A673 (cell line): ENCODE measurements at regions of chr12 and their contacts with region 1.

Region 1: DNA sequence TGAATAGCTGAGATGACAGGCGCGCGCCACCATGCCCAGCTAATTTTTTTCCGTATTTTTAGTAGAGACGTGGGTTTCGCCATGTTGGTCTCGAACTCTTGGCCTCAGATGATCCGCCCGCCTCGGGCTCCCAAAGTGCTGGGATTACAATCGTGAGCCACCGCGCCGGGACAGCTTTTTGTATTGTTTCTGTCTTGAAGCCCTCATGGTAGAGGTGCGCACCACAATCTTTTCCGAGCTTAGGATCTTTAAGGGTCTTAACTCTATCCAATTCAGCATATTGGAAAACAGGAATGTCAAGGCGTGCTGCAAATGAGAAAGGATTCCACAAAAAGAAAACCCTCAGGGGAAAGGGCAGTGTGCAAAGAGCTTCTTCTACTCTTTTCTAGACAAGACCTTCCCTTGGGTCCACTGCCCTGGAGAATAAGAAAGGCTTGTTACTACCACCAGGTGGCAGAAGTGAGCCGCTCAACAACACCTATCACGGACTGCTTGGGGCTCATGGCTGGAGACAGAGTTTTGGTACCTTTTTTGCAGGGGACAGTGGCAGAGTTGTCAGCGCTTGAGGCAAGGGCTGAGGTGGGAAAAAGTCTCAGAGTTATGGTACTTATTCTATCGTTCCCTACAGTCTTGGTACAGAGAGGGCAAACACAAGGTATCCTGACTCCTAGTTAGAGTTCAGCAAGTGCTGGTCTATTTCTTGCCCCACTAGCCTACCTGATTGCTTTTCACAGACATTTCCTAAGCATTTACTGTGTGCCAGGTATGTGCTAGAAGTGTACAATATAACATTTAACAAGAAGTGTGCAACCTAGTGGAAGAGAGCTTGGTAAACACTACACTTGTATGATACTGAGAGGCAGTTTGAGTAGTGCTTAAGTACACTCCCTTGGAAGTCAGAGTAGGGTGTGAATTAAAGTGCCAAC is 16.4 kb upstream of the SP7 start:
- DNase-seq: peak; percentile 92
- H3K4me3 ChIP-seq: no peak overlapping the region
- H3K27ac ChIP-seq: no peak overlapping the region
- H3K4me1 ChIP-seq: no peaks in the 10 kb centered on the region
- H3K27me3 ChIP-seq: no peaks in the 10 kb centered on the region
- CTCF ChIP-seq: peak; percentile 90

Region 2: GRCh38 chr12:53508534-53509199 is 156.1 kb after region 1 on chr12:
- CTCF ChIA-PET with region 1: interaction called, 6 read pairs
- POLR2A ChIA-PET with region 1: no interaction called
- intact Hi-C with region 1: loop called (anchors 2 kb)
- DNase-seq: peak; percentile 89
- H3K4me3 ChIP-seq: no peak overlapping the region
- H3K27ac ChIP-seq: no peak overlapping the region
- H3K4me1 ChIP-seq: peaks cover 3% of the 10 kb centered on the region
- H3K27me3 ChIP-seq: no peaks in the 10 kb centered on the region
- CTCF ChIP-seq: peak; percentile 96